ENCODE measurements at regions of chr10 and their contacts with region 1.

Region 1: DNA sequence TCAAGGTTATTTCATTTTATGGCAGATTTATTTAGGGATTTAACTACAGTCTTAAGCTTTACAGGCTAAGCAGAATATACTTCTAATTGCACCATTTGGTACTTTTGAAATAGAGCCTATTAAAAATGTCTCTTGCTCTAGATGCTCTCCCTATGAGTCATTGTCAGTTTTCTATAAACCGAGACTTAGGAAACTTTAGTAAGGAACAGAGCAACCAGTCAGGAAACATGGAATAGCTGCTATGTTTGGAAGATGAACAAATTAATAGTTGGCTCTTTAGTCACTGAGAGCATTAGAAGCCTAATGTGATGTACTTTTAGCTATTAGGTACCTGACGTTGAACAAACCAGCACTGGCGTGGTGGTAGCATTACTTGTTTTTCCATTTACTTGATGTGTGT is 35.3 kb downstream of the INPP5F start:
- DNase-seq: no peak
- H3K4me3 Mint-ChIP-seq: no peak overlapping the region
- H3K27ac Mint-ChIP-seq: no peak overlapping the region
- H3K4me1 Mint-ChIP-seq: peaks cover 3% of the 10 kb centered on the region
- H3K27me3 Mint-ChIP-seq: no peaks in the 10 kb centered on the region

Region 2: GRCh38 chr10:119834188-119834587 is 73.1 kb after region 1 on chr10:
- CTCF ChIA-PET with region 1: no interaction called
- intact Hi-C with region 1: loop called (anchors 5 kb)
- DNase-seq: peak; percentile 18
- H3K4me3 Mint-ChIP-seq: no peak overlapping the region
- H3K27ac Mint-ChIP-seq: peak overlapping the region; percentile 46
- H3K4me1 Mint-ChIP-seq: peaks cover 23% of the 10 kb centered on the region
- H3K27me3 Mint-ChIP-seq: no peaks in the 10 kb centered on the region

Region 3: GRCh38 chr10:120184547-120185337 is 423.6 kb after region 1 on chr10:
- CTCF ChIA-PET with region 1: no interaction called
- intact Hi-C with region 1: no loop called
- DNase-seq: no peak
- H3K4me3 Mint-ChIP-seq: no peak overlapping the region
- H3K27ac Mint-ChIP-seq: no peak overlapping the region
- H3K4me1 Mint-ChIP-seq: no peaks in the 10 kb centered on the region
- H3K27me3 Mint-ChIP-seq: no peaks in the 10 kb centered on the region

Region 4: GRCh38 chr10:120770496-120770895 is 1009.4 kb after region 1 on chr10:
- CTCF ChIA-PET with region 1: no interaction called
- intact Hi-C with region 1: no loop called
- DNase-seq: no peak
- H3K4me3 Mint-ChIP-seq: no peak overlapping the region
- H3K27ac Mint-ChIP-seq: no peak overlapping the region
- H3K4me1 Mint-ChIP-seq: no peaks in the 10 kb centered on the region
- H3K27me3 Mint-ChIP-seq: peaks cover 4% of the 10 kb centered on the region

Measured in activated naive CD4-positive, alpha-beta T cell treated with anti-CD3 and anti-CD28 coated beads for 36 hours (primary cell).